GM12878 (cell line): ENCODE measurements at regions of chrX and their contacts with region 1.

Region 1: GRCh38 chrX:147859666-147860065 is 52.1 kb upstream of the FMR1 start:
- DNase-seq: no peak
- ATAC-seq: no peak
- H3K4me3 ChIP-seq: no peak overlapping the region
- H3K27ac ChIP-seq: no peak overlapping the region
- H3K4me1 ChIP-seq: no peaks in the 10 kb centered on the region
- H3K27me3 ChIP-seq: no peaks in the 10 kb centered on the region
- CTCF ChIP-seq: no peak
- EP300 ChIP-seq: no peak
- POLR2A ChIP-seq: no peak
- RAD21 ChIP-seq: no peak

Region 2: DNA sequence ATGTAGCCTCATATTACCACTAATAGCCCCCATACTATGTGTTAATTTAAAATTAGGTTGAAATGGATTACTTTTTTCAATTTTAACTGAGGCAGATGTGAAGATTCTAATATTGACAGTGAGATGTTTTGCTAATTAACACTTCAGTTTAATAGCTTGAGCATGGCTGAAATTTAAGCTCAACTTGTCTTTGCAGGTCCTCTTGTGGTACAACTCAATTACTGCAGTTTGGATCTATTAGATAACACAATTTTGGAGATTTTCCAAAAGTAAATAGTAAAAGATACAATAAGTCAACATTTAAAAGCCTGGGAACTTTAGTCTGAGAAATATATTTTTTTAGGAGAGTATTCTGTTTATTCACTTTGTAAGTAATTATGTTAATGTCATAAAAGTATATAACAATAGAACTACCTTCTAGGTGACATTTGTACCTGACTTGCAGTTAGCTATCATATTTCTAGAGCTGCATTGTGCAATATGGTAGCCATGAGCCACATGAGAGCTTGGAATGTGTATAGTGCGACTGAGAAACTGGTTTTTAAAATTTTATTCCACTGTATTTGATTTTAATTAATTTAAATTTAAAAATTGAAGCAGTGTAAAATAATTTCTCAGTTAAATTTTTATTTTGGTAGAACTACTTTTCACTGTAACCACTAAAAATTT is 21.1 kb before region 1 on chrX:
- CTCF ChIA-PET with region 1: no interaction called
- POLR2A ChIA-PET with region 1: no interaction called
- RAD21 ChIA-PET with region 1: no interaction called
- SMC1A ChIA-PET with region 1: no interaction called
- in situ Hi-C with region 1: no loop called
- intact Hi-C with region 1: no loop called
- DNase-seq: no peak
- ATAC-seq: no peak
- H3K4me3 ChIP-seq: no peak overlapping the region
- H3K27ac ChIP-seq: no peak overlapping the region
- H3K4me1 ChIP-seq: no peaks in the 10 kb centered on the region
- H3K27me3 ChIP-seq: no peaks in the 10 kb centered on the region
- CTCF ChIP-seq: peak; percentile 38 to 43 (median 38); a peak in 4 of 6 replicates
- EP300 ChIP-seq: no peak
- POLR2A ChIP-seq: no peak
- RAD21 ChIP-seq: peak; percentile 56

Region 3: GRCh38 chrX:147911192-147912022 is 51.7 kb after region 1 on chrX and contains the start of gene FMR1:
- CTCF ChIA-PET with region 1: no interaction called
- POLR2A ChIA-PET with region 1: no interaction called
- RAD21 ChIA-PET with region 1: no interaction called
- SMC1A ChIA-PET with region 1: no interaction called
- in situ Hi-C with region 1: no loop called
- intact Hi-C with region 1: no loop called
- DNase-seq: peak; percentile 60
- ATAC-seq: peak; percentile 85
- H3K4me3 ChIP-seq: peak within 1 kb of the TSS; percentile 71
- H3K27ac ChIP-seq: peak within 1 kb of the TSS; percentile 85
- H3K4me1 ChIP-seq: no peaks in the 10 kb centered on the region
- H3K27me3 ChIP-seq: no peaks in the 10 kb centered on the region
- CTCF ChIP-seq: no peak
- EP300 ChIP-seq: peak in 1 of 2 experiments; percentile 21; a peak in 1 of 4 replicates
- POLR2A ChIP-seq: peak; percentile 86
- RAD21 ChIP-seq: no peak
- polyA plus RNA-seq, gene FMR1: 7.9 to 12.6 TPM

Region 4: GRCh38 chrX:147958291-147958690 is 98.6 kb after region 1 on chrX:
- CTCF ChIA-PET with region 1: no interaction called
- POLR2A ChIA-PET with region 1: no interaction called
- RAD21 ChIA-PET with region 1: no interaction called
- SMC1A ChIA-PET with region 1: no interaction called
- in situ Hi-C with region 1: no loop called
- intact Hi-C with region 1: loop called (anchors 5 kb)
- DNase-seq: no peak
- ATAC-seq: no peak
- H3K4me3 ChIP-seq: no peak overlapping the region
- H3K27ac ChIP-seq: no peak overlapping the region
- H3K4me1 ChIP-seq: no peaks in the 10 kb centered on the region
- H3K27me3 ChIP-seq: no peaks in the 10 kb centered on the region
- CTCF ChIP-seq: no peak
- EP300 ChIP-seq: no peak
- POLR2A ChIP-seq: no peak
- RAD21 ChIP-seq: no peak